ENCODE measurements at regions of chr16 and their contacts with region 1.

Region 1: GRCh38 chr16:81703177-81704155 is 75.6 kb upstream of the PLCG2 start:
- DNase-seq: no peak
- ATAC-seq: no peak
- H3K4me3 ChIP-seq: no peak overlapping the region
- H3K27ac ChIP-seq: no peak overlapping the region
- H3K4me1 ChIP-seq: peaks cover 0 to 11% (median 11%) of the 10 kb centered on the region in 3 donors
- H3K27me3 ChIP-seq: no peaks in the 10 kb centered on the region
- CTCF ChIP-seq: no peak

Region 2: DNA sequence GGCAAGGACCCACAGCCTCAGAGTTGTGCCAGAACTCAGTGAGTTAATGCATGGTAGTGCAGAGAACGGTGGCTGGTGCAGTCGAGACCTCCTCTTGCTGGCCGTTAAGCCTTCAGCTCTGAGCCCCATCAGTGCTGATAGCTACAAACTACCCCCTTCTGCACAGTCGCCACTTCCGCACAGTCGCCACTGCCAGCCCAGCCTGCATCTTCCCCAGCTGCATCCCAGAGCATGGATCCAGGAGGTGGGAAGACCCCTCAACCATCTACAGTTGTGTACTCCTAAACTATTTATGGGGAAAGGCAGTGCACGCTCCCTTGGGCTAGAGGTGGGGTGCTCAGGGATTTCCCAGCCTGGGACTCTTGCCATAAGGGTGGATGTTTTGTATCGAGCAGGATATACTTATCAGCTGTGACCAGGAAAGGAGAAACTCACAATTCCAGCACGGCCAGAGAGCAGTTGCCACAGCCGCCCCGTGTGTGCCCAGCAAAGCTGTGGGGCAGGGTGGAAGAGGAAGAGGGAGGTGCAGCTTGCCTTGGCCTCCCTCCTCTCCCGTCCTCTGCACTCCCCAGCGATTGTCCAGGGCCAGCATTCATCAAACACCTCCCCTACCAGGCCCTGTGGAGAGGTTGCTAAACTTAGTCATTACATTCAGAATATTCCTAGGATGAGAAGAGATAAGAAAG is 308.4 kb before region 1 on chr16:
- intact Hi-C with region 1: loop called in 1 of 3 experiments (anchors 10 kb)
- DNase-seq: no peak
- ATAC-seq: peak in 3 of 4 donors; percentile 40 to 51 (median 44)
- H3K4me3 ChIP-seq: no peak overlapping the region
- H3K27ac ChIP-seq: no peak overlapping the region
- H3K4me1 ChIP-seq: no peaks in the 10 kb centered on the region
- H3K27me3 ChIP-seq: no peaks in the 10 kb centered on the region
- CTCF ChIP-seq: no peak